ENCODE measurements at regions of chr2 and their contacts with region 1.

Region 1: GRCh38 chr2:222057347-222058073 is 241.3 kb downstream of the PAX3 start:
- DNase-seq: no peak
- ATAC-seq: no peak
- H3K4me3 Mint-ChIP-seq: no peak overlapping the region
- H3K27ac Mint-ChIP-seq: no peak overlapping the region
- H3K4me1 Mint-ChIP-seq: no peaks in the 10 kb centered on the region
- H3K27me3 Mint-ChIP-seq: peaks cover 35% of the 10 kb centered on the region

Region 2: DNA sequence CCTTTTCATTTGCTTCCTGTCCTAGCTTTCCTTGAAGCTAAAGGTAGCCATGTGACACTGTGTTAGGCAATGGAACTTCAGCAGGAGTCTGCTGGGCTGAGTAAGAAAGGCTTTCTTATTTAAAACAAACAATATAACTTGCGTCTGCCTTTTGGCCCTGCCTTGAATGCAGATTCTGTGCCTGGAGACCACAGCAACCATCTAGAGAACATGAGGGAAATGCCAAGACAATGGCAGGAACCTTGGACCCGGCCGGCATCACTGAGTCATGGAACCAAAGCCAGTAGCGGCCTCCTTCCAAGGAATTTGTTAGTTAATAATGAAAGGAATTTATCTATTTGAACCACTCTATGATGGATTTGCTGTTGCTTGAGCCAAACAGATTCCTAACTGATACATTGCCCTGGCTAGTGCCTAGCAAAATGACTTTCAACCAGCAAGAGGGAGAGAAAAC is 277.9 kb before region 1 on chr2:
- CTCF ChIA-PET with region 1: no interaction called
- POLR2A ChIA-PET with region 1: no interaction called
- intact Hi-C with region 1: no loop called
- DNase-seq: no peak
- ATAC-seq: no peak
- H3K4me3 Mint-ChIP-seq: no peak overlapping the region
- H3K27ac Mint-ChIP-seq: no peak overlapping the region
- H3K4me1 Mint-ChIP-seq: no peaks in the 10 kb centered on the region
- H3K27me3 Mint-ChIP-seq: no peaks in the 10 kb centered on the region

Region 3: GRCh38 chr2:222305516-222306392 is 248.2 kb after region 1 on chr2:
- CTCF ChIA-PET with region 1: no interaction called
- POLR2A ChIA-PET with region 1: no interaction called
- intact Hi-C with region 1: loop called (anchors 5 to 10 kb)
- DNase-seq: no peak
- ATAC-seq: no peak
- H3K4me3 Mint-ChIP-seq: peak overlapping the region; percentile 62
- H3K27ac Mint-ChIP-seq: no peak overlapping the region
- H3K4me1 Mint-ChIP-seq: peaks cover 25% of the 10 kb centered on the region
- H3K27me3 Mint-ChIP-seq: peaks cover 90% of the 10 kb centered on the region

Region 4: GRCh38 chr2:222561817-222562645 is 504.5 kb after region 1 on chr2:
- CTCF ChIA-PET with region 1: no interaction called
- POLR2A ChIA-PET with region 1: no interaction called
- intact Hi-C with region 1: loop called (anchors 1 to 5 kb)
- DNase-seq: peak; percentile 50
- ATAC-seq: peak; percentile 84
- H3K4me3 Mint-ChIP-seq: no peak overlapping the region
- H3K27ac Mint-ChIP-seq: no peak overlapping the region
- H3K4me1 Mint-ChIP-seq: peaks cover under 1% of the 10 kb centered on the region
- H3K27me3 Mint-ChIP-seq: peaks cover 1% of the 10 kb centered on the region

Region 5: DNA sequence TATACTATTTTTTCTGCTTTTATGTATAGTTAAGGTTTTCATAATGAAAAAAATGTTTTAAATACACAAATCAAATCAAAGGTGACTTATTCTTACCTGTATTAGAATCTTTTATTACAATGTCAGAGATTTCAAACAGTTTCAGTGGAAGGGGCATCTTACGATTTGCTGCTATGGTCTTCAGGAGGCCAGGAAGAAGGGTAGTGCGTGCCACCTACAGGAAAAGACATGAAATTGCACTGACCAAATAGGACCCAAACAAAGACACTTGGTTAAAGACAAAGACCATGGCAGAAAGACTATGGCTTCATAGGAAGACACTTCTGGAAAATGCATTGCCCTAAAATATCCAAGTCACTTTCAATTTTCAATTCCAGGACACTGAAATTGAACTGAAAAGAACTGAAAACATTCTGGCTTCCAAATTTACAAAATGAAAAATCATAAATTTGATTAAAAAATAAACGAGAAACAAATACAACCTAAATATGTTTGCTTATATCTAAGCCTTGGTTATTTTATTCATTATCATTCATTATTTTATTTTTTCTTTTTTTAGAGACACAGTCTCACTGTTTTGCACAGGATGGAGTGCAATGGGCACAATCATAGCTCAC is 556.3 kb after region 1 on chr2:
- CTCF ChIA-PET with region 1: interaction called, 4 read pairs
- POLR2A ChIA-PET with region 1: no interaction called
- intact Hi-C with region 1: loop called (anchors 1 to 2 kb)
- DNase-seq: peak; percentile 15
- ATAC-seq: peak; percentile 55
- H3K4me3 Mint-ChIP-seq: no peak overlapping the region
- H3K27ac Mint-ChIP-seq: no peak overlapping the region
- H3K4me1 Mint-ChIP-seq: peaks cover 5% of the 10 kb centered on the region
- H3K27me3 Mint-ChIP-seq: no peaks in the 10 kb centered on the region

Measured in activated CD4-positive, alpha-beta T cell treated with anti-CD3 and anti-CD28 coated beads for 36 hours (primary cell).